Activated CD4-positive, alpha-beta memory T cell treated with anti-CD3 and anti-CD28 coated beads for 36 hours (primary cell): ENCODE measurements at regions of chr2 and their contacts with region 1.

Region 1: DNA sequence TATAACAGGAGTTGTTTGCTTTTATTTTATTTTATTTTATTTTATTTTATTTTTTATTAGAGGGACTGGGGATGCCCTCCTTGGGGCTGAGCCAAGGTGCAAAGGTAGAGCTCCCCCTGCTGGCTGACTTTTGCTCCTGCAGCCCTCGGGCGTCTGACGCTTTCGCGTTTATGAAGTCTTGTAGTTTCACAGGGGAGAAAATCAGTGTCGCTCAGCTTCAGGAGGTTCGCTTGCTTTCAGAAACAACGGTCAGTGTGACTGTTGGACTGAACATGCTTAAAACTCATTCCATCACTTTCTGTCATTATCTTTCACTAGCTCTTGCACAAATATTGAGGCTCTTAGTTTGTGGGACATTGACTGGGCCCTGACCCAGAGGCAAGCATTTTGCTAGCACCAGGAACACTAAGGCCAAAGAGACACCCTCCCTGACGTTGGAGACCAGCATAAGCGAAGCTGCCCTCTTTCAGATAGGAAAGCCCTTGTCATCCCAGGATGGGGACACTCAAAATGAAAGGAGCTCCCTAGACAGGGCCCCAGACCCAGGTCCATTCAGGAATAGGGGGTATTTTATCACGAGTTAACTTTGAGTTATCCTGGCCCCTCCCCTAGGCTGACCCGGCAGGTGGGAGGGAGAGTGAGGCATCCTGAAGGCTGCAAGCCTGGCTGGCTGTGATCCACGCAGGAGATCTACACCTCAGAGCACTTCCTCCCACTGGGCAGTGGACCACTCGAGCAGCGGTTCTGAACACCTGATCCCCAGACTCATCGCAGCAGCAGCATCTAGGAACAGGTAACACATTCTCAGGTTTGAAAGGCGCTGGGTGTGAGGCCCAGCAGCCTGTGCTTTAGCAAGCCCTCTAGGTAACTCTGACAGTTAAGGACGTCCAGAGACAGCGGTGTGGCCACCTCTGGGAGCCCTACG is 34.4 kb downstream of the LGALSL start:
- DNase-seq: peak; percentile 85
- H3K4me3 Mint-ChIP-seq: no peak overlapping the region
- H3K27ac Mint-ChIP-seq: no peak overlapping the region
- H3K4me1 Mint-ChIP-seq: peaks cover 10% of the 10 kb centered on the region
- H3K27me3 Mint-ChIP-seq: peaks cover under 1% of the 10 kb centered on the region

Region 2: GRCh38 chr2:64052468-64053241 is 435.7 kb before region 1 on chr2:
- CTCF ChIA-PET with region 1: interaction called, 33 read pairs
- POLR2A ChIA-PET with region 1: no interaction called
- intact Hi-C with region 1: loop called (anchors 1 kb)
- DNase-seq: no peak
- H3K4me3 Mint-ChIP-seq: no peak overlapping the region
- H3K27ac Mint-ChIP-seq: no peak overlapping the region
- H3K4me1 Mint-ChIP-seq: peaks cover 36% of the 10 kb centered on the region
- H3K27me3 Mint-ChIP-seq: no peaks in the 10 kb centered on the region

Region 3: GRCh38 chr2:64342195-64343099 is 145.9 kb before region 1 on chr2:
- CTCF ChIA-PET with region 1: interaction called, 12 read pairs
- POLR2A ChIA-PET with region 1: no interaction called
- intact Hi-C with region 1: no loop called
- DNase-seq: no peak
- H3K4me3 Mint-ChIP-seq: no peak overlapping the region
- H3K27ac Mint-ChIP-seq: no peak overlapping the region
- H3K4me1 Mint-ChIP-seq: no peaks in the 10 kb centered on the region
- H3K27me3 Mint-ChIP-seq: peaks cover 5% of the 10 kb centered on the region

Region 4: DNA sequence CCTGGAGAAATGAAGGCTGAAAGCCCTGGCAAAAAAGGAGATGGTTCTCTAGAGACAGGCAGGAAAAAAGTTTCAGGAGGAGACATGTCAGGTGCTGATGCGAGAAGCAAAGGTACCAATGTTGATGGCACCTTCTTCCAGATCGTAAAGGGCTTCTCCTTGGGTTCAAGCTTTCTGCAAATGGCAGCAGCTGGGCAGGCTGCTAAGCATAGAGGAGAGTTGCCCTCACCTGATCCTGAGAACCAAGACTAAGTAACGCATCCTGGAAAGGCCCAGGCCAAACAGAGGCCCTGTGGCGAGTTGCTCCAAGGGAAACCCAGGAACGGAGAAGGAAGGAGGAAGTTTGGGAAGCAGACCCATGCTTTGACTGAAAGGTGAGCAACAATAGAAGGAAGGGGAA is 12.2 kb after region 1 on chr2:
- CTCF ChIA-PET with region 1: interaction called, 27 read pairs
- POLR2A ChIA-PET with region 1: no interaction called
- intact Hi-C with region 1: no loop called
- DNase-seq: no peak
- H3K4me3 Mint-ChIP-seq: no peak overlapping the region
- H3K27ac Mint-ChIP-seq: no peak overlapping the region
- H3K4me1 Mint-ChIP-seq: peaks cover 10% of the 10 kb centered on the region
- H3K27me3 Mint-ChIP-seq: peaks cover 16% of the 10 kb centered on the region

Region 5: GRCh38 chr2:64562148-64562784 is 74.0 kb after region 1 on chr2:
- CTCF ChIA-PET with region 1: interaction called, 15 read pairs
- POLR2A ChIA-PET with region 1: no interaction called
- intact Hi-C with region 1: no loop called
- DNase-seq: no peak
- H3K4me3 Mint-ChIP-seq: no peak overlapping the region
- H3K27ac Mint-ChIP-seq: no peak overlapping the region
- H3K4me1 Mint-ChIP-seq: peaks cover 48% of the 10 kb centered on the region
- H3K27me3 Mint-ChIP-seq: no peaks in the 10 kb centered on the region

Region 6: DNA sequence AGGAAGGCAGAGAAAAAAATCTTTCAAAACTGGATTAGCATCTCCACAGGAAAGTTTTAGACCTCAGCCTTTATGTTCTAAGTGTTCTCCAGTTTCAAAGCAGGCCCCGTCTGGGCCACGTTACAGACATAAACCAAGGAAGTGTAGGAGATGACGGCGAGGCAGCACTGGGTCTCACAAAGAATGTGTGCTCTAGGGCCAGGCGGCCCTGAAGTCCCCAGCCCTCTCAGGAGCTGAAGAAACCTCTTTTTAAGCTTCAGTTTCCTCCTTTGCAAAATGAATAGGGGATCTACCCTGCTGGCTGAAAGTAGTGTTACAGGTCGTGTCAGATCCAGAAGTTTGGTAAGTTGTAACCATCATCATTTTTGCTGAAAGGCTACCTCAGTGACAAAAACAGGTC is 862.4 kb after region 1 on chr2:
- CTCF ChIA-PET with region 1: no interaction called
- POLR2A ChIA-PET with region 1: no interaction called
- intact Hi-C with region 1: no loop called
- DNase-seq: no peak
- H3K4me3 Mint-ChIP-seq: no peak overlapping the region
- H3K27ac Mint-ChIP-seq: no peak overlapping the region
- H3K4me1 Mint-ChIP-seq: no peaks in the 10 kb centered on the region
- H3K27me3 Mint-ChIP-seq: no peaks in the 10 kb centered on the region